Panc1 (cell line): ENCODE measurements at regions of chr17 and their contacts with region 1.

Region 1: DNA sequence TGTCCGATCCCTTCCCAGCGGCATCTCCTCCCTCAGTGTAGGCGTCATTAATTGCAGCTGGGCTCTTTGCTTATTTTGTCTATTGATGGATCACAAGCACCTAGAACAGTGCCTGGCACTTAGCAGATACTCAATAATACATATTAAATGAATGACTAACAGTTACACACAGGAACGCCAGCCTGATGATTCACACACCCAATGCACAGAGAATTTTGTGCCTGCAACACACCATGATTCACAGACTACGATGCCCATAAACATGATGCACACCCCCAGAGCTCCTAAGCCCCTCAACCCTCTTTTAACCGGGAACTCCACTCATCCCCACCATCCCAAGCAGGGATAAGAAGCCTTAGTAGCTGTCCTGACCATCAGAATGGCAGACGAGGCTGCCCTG is 66.6 kb upstream of the TMEM97 start:
- DNase-seq: no peak
- ATAC-seq: no peak
- H3K4me3 ChIP-seq: no peak overlapping the region
- H3K27ac ChIP-seq: no peak overlapping the region
- H3K4me1 ChIP-seq: peaks cover 3% of the 10 kb centered on the region; the same call in 1 of the 2 replicates
- H3K27me3 ChIP-seq: no peaks in the 10 kb centered on the region
- CTCF ChIP-seq: no peak

Region 2: GRCh38 chr17:27892866-27893769 is 359.3 kb before region 1 on chr17 and contains the start of gene LYRM9:
- CTCF ChIA-PET with region 1: no interaction called
- POLR2A ChIA-PET with region 1: no interaction called
- in situ Hi-C with region 1: no loop called
- intact Hi-C with region 1: loop called (anchors 5 kb)
- DNase-seq: peak; percentile 28
- ATAC-seq: peak; percentile 100
- H3K4me3 ChIP-seq: peak within 1 kb of the TSS; percentile 57 to 69
- H3K27ac ChIP-seq: peak within 1 kb of the TSS; percentile 74
- H3K4me1 ChIP-seq: peaks cover 14% of the 10 kb centered on the region; the same call in 1 of the 2 replicates
- H3K27me3 ChIP-seq: peaks cover 13% of the 10 kb centered on the region
- CTCF ChIP-seq: peak; percentile 99
- total RNA-seq, gene LYRM9: 1.6 TPM

Region 3: GRCh38 chr17:28216528-28216927 is 35.9 kb before region 1 on chr17:
- CTCF ChIA-PET with region 1: interaction called, 4 read pairs
- POLR2A ChIA-PET with region 1: interaction called, 11 read pairs
- in situ Hi-C with region 1: no loop called
- intact Hi-C with region 1: no loop called
- DNase-seq: no peak
- ATAC-seq: peak; percentile 77; the same call in 1 of the 2 replicates
- H3K4me3 ChIP-seq: no peak overlapping the region
- H3K27ac ChIP-seq: no peak overlapping the region
- H3K4me1 ChIP-seq: no peaks in the 10 kb centered on the region
- H3K27me3 ChIP-seq: no peaks in the 10 kb centered on the region
- CTCF ChIP-seq: no peak

Region 4: GRCh38 chr17:28515518-28515917 is 263.1 kb after region 1 on chr17:
- CTCF ChIA-PET with region 1: no interaction called
- POLR2A ChIA-PET with region 1: no interaction called
- in situ Hi-C with region 1: no loop called
- intact Hi-C with region 1: no loop called
- DNase-seq: no peak
- ATAC-seq: no peak
- H3K4me3 ChIP-seq: no peak overlapping the region
- H3K27ac ChIP-seq: no peak overlapping the region
- H3K4me1 ChIP-seq: no peaks in the 10 kb centered on the region
- H3K27me3 ChIP-seq: peaks cover 2% of the 10 kb centered on the region; the same call in 1 of the 2 replicates
- CTCF ChIP-seq: no peak

Region 5: DNA sequence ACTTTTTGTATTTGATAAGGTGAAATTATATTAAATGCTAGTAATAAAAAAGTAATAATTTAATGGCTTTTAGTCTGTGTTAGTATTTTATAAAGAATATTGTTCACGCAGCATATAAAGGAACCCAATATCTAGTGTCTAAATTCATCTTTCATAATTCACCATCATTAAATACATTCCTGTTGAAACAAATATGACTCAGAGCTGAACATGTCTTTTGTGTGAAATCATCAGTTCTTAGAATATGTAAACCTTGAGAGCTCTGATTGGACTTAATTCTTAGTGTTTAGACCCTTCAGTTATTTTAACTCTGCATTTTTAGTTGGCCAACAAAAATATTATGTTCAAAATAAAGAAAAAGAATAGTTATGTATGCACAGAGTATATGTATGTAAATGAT is 1242.6 kb after region 1 on chr17:
- CTCF ChIA-PET with region 1: no interaction called
- POLR2A ChIA-PET with region 1: no interaction called
- in situ Hi-C with region 1: no loop called
- intact Hi-C with region 1: no loop called
- DNase-seq: peak; percentile 4
- ATAC-seq: no peak
- H3K4me3 ChIP-seq: no peak overlapping the region
- H3K27ac ChIP-seq: no peak overlapping the region
- H3K4me1 ChIP-seq: no peaks in the 10 kb centered on the region
- H3K27me3 ChIP-seq: no peaks in the 10 kb centered on the region
- CTCF ChIP-seq: no peak